Right ventricle myocardium inferior (tissue), 1 donor: ENCODE measurements at regions of chr10 and their contacts with region 1.

Region 1: GRCh38 chr10:92432596-92432995 is 141.3 kb downstream of the IDE start:
- DNase-seq: no peak
- ATAC-seq: no peak

Region 2: DNA sequence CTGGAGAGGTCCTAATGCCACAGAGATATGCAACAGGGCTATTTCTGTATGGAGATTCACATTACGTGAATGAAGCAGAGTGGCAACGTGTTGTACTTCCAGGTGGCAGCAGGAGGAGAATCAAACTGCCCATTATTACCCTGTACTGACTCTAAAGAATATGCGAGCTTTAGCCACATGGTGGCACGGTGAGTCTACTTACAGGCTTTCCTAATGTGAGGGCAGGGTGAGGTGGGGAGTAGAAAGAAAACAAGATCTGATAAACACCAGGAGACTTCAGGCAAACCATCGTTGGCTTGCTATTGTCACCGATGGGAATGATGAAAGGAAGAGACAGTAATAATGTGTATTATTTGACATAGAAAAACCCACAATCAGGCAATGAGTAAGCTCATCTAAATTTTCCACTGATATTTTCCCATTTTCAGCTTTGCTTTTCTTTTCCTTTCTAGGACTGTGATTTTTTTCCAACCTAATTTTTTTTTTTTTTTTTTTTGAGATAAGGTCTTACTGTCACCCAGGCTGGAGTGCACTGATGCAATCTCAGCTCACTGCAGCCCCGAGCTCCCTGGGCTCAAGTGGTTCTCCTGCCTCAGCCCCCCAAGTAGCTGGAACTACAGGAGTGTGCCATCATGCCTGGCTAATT is 344.7 kb before region 1 on chr10:
- intact Hi-C with region 1: loop called (anchors 2 kb)
- DNase-seq: no peak
- ATAC-seq: peak; percentile 93

Region 3: DNA sequence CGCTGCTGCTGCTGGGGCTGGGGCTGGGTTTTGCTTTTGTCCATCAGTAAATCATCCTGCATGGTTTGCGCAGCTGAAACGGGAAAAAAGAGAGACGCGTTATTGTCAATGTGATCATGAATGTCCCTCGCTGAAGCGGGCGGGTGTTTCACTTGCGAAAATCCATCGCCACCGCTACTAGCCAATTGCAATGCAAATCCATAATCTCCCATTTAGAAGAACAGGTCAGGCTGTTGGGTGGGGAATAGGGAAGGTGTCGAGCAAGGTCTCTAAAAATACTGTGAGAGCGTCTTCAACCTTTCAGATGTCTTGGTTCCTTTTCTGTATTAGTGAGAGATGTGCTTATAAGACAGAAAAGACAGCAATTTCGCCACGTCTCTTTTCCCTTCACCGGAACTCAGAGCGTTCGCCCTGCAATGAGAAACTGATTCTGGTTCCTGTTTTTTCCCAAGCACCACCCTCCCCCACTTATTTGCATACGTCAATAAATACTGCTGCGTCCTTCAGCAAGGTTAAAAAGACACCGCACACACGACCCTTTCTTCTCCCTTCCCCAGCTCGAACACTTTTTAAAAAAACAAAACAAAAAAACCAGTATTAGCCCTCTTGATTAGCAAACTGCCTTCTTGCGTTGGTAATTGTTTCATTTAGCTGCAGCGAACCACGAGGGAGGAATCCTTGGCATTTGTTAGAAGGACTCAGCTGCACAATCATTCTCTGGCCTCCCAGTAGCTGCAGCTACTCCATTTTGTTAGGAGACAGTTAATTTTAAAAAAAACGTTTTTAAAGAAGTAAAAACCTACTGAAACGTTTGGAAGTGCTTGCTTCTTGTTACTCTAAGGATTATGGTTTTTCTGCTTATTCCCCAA is 192.1 kb before region 1 on chr10:
- intact Hi-C with region 1: loop called (anchors 5 kb)
- DNase-seq: no peak
- ATAC-seq: peak; percentile 76

Region 4: DNA sequence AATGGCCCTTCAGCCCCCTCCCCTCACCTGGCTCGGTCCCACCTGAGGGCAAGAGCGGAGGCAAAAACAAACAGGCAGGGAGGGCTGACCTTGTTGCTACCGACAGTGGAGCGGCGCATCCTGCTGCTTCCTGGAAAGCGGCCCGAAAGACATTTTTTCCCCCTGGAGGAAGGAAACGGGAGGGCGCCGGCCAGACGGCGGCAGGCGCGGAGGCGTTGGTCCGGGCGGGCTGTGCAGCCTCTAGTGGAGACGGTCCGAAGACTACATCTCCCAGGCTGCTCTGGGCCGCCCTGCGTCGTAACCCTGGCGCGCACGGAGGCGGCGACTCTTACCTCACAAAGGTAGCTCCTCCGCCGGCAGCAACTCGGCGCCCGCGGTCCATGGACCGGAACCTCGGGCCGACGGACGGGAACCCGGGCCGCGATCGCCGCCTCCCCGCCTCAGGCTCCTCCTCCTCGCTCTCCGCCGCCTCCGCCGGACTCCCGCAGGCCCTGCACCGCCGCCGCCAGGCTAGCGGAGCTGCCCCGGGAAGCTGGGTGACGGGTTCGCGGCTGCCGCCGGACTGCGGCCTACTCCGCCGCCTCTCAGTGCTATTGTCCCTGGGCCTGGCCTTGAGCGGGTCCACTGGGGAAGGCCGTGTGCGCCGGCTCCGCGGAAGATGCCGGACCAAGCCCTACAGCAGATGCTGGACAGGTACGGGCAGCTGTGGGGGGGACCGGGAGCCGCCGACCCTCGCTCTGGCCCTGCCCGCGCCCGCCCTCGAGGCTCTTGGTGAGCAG is 141.6 kb before region 1 on chr10 and contains the starts of genes CPEB3 and MARCHF5:
- intact Hi-C with region 1: loop called (anchors 2 kb)
- DNase-seq: peak; percentile 99
- ATAC-seq: peak; percentile 100
- total RNA-seq, gene CPEB3: 14.1 TPM
- total RNA-seq, gene MARCHF5: 36.5 TPM

Region 5: DNA sequence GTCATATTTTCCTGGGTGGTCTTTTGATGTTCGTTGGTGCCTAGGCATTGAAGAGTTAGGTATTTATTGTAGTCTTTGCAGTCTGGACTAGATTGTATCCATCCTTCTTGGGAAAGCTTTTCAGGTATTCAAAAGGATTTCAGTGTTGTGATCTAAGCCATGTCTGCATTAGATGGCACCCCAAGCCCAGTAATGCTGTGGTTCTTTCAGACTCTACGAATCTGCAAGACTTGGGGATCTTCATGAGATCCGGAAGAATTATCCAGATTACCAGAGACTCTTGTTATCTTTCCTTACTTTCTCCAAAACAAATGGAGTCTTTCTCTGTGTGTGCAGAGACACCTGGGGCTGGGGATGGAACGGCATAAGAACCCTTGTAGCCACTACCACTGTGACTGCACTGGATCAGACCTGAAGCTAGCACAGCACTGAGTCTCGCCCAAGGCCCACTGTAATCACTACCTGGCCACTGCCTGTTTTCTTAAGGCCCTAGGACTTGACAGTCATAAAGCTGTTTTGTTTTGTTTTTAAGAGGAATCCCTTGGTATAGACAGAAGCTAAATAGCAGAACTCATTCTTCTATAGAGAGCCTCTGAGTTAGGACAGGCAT is 66.1 kb before region 1 on chr10:
- intact Hi-C with region 1: loop called (anchors 2 kb)
- DNase-seq: no peak
- ATAC-seq: no peak

Region 6: GRCh38 chr10:92381543-92381954 is 51.0 kb before region 1 on chr10:
- intact Hi-C with region 1: loop called (anchors 2 kb)
- DNase-seq: no peak
- ATAC-seq: no peak